ENCODE measurements at regions of chr6 and their contacts with region 1.

Region 1: DNA sequence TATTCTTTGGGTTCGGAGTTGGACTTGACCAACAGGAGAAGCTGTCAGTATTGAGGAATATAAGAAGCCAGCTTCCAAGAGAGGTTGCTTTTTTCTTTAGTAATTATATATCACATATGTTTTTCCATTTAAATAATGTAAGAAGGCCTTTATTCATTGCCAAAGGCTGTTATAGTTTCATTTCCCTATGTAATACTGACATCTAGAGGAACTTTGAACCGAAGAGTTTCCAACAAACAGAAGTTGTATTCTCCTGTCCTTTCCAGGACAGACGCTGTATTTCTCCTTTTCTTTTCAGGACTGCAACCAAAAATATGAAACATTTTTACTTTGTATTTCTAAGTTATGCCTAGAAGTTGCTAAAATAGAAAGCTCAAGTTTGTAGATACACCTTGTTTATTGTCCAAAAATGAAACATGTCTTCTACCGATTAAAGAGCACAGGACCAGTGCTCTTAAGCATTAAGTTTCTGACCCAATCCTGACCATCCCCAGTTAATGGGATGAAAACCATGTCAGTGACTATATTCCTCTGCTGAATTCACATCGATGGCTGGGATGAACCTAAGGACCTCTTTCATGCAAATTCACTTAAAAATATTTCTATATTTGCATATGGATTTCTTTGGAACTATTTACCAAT is 55.1 kb downstream of the MYLK4 start:
- DNase-seq: peak; percentile 42
- ATAC-seq: no peak
- H3K4me3 ChIP-seq: no peak overlapping the region
- H3K4me3 Mint-ChIP-seq: no peak overlapping the region
- H3K27ac ChIP-seq: no peak overlapping the region
- H3K27ac Mint-ChIP-seq: no peak overlapping the region
- H3K4me1 ChIP-seq: no peaks in the 10 kb centered on the region
- H3K4me1 Mint-ChIP-seq: no peaks in the 10 kb centered on the region
- H3K27me3 ChIP-seq: no peaks in the 10 kb centered on the region
- H3K27me3 Mint-ChIP-seq: peaks cover 7% of the 10 kb centered on the region
- CTCF ChIP-seq: peak; percentile 66

Region 2: GRCh38 chr6:1604158-1605030 is 1091.2 kb before region 1 on chr6:
- CTCF ChIA-PET with region 1: interaction called, 7 read pairs
- POLR2A ChIA-PET with region 1: no interaction called
- intact Hi-C with region 1: loop called (anchors 1 kb)
- DNase-seq: peak; percentile 84
- ATAC-seq: peak; percentile 81
- H3K4me3 ChIP-seq: peak overlapping the region in 4 of 5 experiments; percentile 10 to 59 (median 42)
- H3K4me3 Mint-ChIP-seq: peak overlapping the region; percentile 34
- H3K27ac ChIP-seq: no peak overlapping the region
- H3K27ac Mint-ChIP-seq: no peak overlapping the region
- H3K4me1 ChIP-seq: peaks cover 50 to 52% of the 10 kb centered on the region in 2 donors
- H3K4me1 Mint-ChIP-seq: peaks cover 34% of the 10 kb centered on the region
- H3K27me3 ChIP-seq: peaks cover 0 to 83% (median 66%) of the 10 kb centered on the region in 4 experiments
- H3K27me3 Mint-ChIP-seq: peaks cover 73% of the 10 kb centered on the region
- CTCF ChIP-seq: peak; percentile 99

Region 3: DNA sequence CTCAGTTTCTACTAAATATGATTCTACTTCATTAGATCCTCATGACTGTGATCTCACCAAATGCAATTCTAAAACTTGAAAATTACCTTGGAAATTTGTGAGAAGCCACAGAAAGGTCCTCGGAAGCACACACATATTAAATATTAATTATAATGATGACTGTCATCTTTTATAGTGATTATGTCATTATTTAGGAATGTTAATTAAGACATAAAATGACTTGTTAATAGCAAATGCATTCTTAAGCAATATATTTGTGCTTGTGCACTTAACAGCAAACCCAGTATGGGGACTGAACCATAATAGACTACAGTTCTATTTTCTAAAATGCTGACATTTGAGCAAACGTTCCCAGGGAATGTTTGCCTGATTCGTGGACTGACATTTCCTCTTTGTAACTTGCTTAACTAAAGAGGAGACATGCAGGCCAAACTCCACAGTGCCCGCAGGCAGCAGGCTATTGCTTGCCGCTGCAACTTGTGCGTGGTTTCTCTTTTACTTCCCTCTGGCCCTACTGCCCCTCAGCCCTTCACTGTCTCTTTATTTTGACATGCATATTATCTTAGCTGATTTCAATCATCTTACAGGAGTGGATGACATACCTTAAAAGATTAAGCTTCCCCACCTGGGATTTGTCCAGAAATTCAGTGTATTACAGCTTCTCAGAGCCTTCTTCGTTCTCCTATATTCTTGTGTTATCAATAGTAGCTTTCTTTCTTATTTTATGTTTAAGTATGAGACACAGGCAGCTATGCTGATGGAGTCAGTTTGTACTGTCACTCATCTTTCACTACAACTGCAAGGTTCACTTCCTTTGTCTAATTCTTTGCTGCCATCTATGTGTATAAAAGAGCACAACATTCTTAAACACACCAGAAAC is 591.7 kb before region 1 on chr6:
- CTCF ChIA-PET with region 1: no interaction called
- POLR2A ChIA-PET with region 1: no interaction called
- intact Hi-C with region 1: loop called (anchors 10 kb)
- DNase-seq: peak; percentile 50
- ATAC-seq: peak; percentile 36
- H3K4me3 ChIP-seq: no peak overlapping the region
- H3K4me3 Mint-ChIP-seq: no peak overlapping the region
- H3K27ac ChIP-seq: no peak overlapping the region
- H3K27ac Mint-ChIP-seq: no peak overlapping the region
- H3K4me1 ChIP-seq: no peaks in the 10 kb centered on the region
- H3K4me1 Mint-ChIP-seq: no peaks in the 10 kb centered on the region
- H3K27me3 ChIP-seq: no peaks in the 10 kb centered on the region
- H3K27me3 Mint-ChIP-seq: no peaks in the 10 kb centered on the region
- CTCF ChIP-seq: peak; percentile 77

Region 4: GRCh38 chr6:2353412-2354137 is 342.0 kb before region 1 on chr6:
- CTCF ChIA-PET with region 1: interaction called, 3 read pairs
- POLR2A ChIA-PET with region 1: no interaction called
- intact Hi-C with region 1: loop called (anchors 10 kb)
- DNase-seq: peak; percentile 63
- ATAC-seq: no peak
- H3K4me3 ChIP-seq: no peak overlapping the region
- H3K4me3 Mint-ChIP-seq: no peak overlapping the region
- H3K27ac ChIP-seq: no peak overlapping the region
- H3K27ac Mint-ChIP-seq: no peak overlapping the region
- H3K4me1 ChIP-seq: no peaks in the 10 kb centered on the region
- H3K4me1 Mint-ChIP-seq: no peaks in the 10 kb centered on the region
- H3K27me3 ChIP-seq: no peaks in the 10 kb centered on the region
- H3K27me3 Mint-ChIP-seq: no peaks in the 10 kb centered on the region
- CTCF ChIP-seq: peak; percentile 87